ENCODE measurements at regions of chr19 and their contacts with region 1.

Region 1: DNA sequence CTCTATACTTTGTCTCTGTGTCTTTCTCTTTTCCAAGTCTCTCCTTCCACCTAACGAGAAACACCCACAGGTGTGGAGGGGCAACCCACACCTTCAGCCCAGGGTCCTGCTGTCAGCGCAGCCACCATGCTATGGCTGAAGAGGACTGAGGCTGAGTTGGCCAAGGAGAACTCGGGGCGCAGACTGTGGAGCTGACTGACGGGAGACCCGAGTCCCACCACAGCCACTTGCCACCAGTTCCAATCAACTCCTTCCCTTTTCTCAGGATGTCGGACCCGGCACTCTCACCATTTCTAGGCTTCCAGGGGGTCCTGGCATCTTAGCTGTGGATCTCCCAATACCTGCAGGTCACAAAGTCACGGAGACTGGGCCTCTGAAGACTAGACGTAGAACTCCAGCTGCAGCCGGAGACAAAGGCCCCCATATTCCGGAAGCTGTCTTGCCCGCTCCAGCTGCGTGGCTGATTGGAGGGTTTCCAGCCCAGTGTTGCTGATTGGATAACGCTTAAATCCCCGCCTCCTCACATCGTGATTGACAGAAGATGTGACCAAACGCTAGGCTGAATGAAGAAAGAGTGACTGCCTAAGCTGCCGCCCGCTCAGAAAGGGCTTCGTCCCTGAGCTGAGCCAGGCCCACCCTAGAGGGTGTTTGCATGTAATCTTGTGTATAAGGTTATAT is 63.6 kb downstream of the ZNF429 start:
- DNase-seq: peak; percentile 48 to 97 (median 76)
- ATAC-seq: peak; percentile 96
- H3K4me3 ChIP-seq: peak overlapping the region; percentile 81
- H3K4me3 Mint-ChIP-seq: peak overlapping the region; percentile 100
- H3K27ac ChIP-seq: peak overlapping the region; percentile 47 to 56
- H3K27ac Mint-ChIP-seq: peak overlapping the region; percentile 99
- H3K4me1 ChIP-seq: no peaks in the 10 kb centered on the region
- H3K4me1 Mint-ChIP-seq: peaks cover 36% of the 10 kb centered on the region
- H3K27me3 ChIP-seq: no peaks in the 10 kb centered on the region
- H3K27me3 Mint-ChIP-seq: no peaks in the 10 kb centered on the region
- CTCF ChIP-seq: no peak

Region 2: GRCh38 chr19:21141787-21142464 is 427.0 kb before region 1 on chr19 and contains the start of gene ZNF431:
- CTCF ChIA-PET with region 1: no interaction called
- POLR2A ChIA-PET with region 1: interaction called, 16 read pairs
- intact Hi-C with region 1: no loop called
- DNase-seq: peak; percentile 79 to 96 (median 84)
- ATAC-seq: peak; percentile 99
- H3K4me3 ChIP-seq: peak within 1 kb of the TSS; percentile 67
- H3K4me3 Mint-ChIP-seq: peak within 1 kb of the TSS; percentile 95
- H3K27ac ChIP-seq: peak within 1 kb of the TSS; percentile 25 to 37
- H3K27ac Mint-ChIP-seq: peak within 1 kb of the TSS; percentile 91
- H3K4me1 ChIP-seq: peaks cover 8% of the 10 kb centered on the region
- H3K4me1 Mint-ChIP-seq: peaks cover 45% of the 10 kb centered on the region
- H3K27me3 ChIP-seq: no peaks in the 10 kb centered on the region
- H3K27me3 Mint-ChIP-seq: no peaks in the 10 kb centered on the region
- CTCF ChIP-seq: no peak
- total RNA-seq, gene ZNF431: 24.6 to 25.9 TPM

Region 3: GRCh38 chr19:21580101-21580500 is 11.1 kb after region 1 on chr19:
- CTCF ChIA-PET with region 1: no interaction called
- POLR2A ChIA-PET with region 1: interaction called, 97 read pairs
- intact Hi-C with region 1: no loop called
- DNase-seq: peak in 3 of 14 experiments; percentile 16 to 55 (median 25)
- ATAC-seq: peak; percentile 65
- H3K4me3 ChIP-seq: no peak overlapping the region
- H3K4me3 Mint-ChIP-seq: peak overlapping the region; percentile 23
- H3K27ac ChIP-seq: peak overlapping the region in 1 of 2 donors; percentile 64
- H3K27ac Mint-ChIP-seq: peak overlapping the region; percentile 84
- H3K4me1 ChIP-seq: no peaks in the 10 kb centered on the region
- H3K4me1 Mint-ChIP-seq: peaks cover 51% of the 10 kb centered on the region
- H3K27me3 ChIP-seq: no peaks in the 10 kb centered on the region
- H3K27me3 Mint-ChIP-seq: no peaks in the 10 kb centered on the region
- CTCF ChIP-seq: no peak

Region 4: GRCh38 chr19:21586311-21587116 is 17.6 kb after region 1 on chr19:
- CTCF ChIA-PET with region 1: no interaction called
- POLR2A ChIA-PET with region 1: interaction called, 97 read pairs
- intact Hi-C with region 1: no loop called
- DNase-seq: peak in 5 of 14 experiments; percentile 5 to 58 (median 35)
- ATAC-seq: peak; percentile 65
- H3K4me3 ChIP-seq: peak overlapping the region; percentile 57
- H3K4me3 Mint-ChIP-seq: peak overlapping the region; percentile 87
- H3K27ac ChIP-seq: no peak overlapping the region
- H3K27ac Mint-ChIP-seq: peak overlapping the region; percentile 55
- H3K4me1 ChIP-seq: peaks cover 4% of the 10 kb centered on the region
- H3K4me1 Mint-ChIP-seq: peaks cover 49% of the 10 kb centered on the region
- H3K27me3 ChIP-seq: no peaks in the 10 kb centered on the region
- H3K27me3 Mint-ChIP-seq: no peaks in the 10 kb centered on the region
- CTCF ChIP-seq: no peak

Region 5: GRCh38 chr19:21604351-21604926 is 35.5 kb after region 1 on chr19:
- CTCF ChIA-PET with region 1: no interaction called
- POLR2A ChIA-PET with region 1: interaction called, 43 read pairs
- intact Hi-C with region 1: loop called in 1 of 2 experiments (anchors 2 kb)
- DNase-seq: peak in 3 of 14 experiments; percentile 34 to 59 (median 54)
- ATAC-seq: peak; percentile 84
- H3K4me3 ChIP-seq: peak overlapping the region; percentile 56
- H3K4me3 Mint-ChIP-seq: peak overlapping the region; percentile 94
- H3K27ac ChIP-seq: peak overlapping the region; percentile 12 to 54
- H3K27ac Mint-ChIP-seq: peak overlapping the region; percentile 91
- H3K4me1 ChIP-seq: peaks cover 8% of the 10 kb centered on the region
- H3K4me1 Mint-ChIP-seq: peaks cover 21% of the 10 kb centered on the region
- H3K27me3 ChIP-seq: no peaks in the 10 kb centered on the region
- H3K27me3 Mint-ChIP-seq: no peaks in the 10 kb centered on the region
- CTCF ChIP-seq: no peak

Region 6: GRCh38 chr19:21767065-21767800 is 198.3 kb after region 1 on chr19 and contains the start of gene ZNF100:
- CTCF ChIA-PET with region 1: no interaction called
- POLR2A ChIA-PET with region 1: interaction called, 17 read pairs
- intact Hi-C with region 1: no loop called
- DNase-seq: peak; percentile 73 to 92 (median 82)
- ATAC-seq: peak; percentile 98
- H3K4me3 ChIP-seq: peak within 1 kb of the TSS; percentile 94
- H3K4me3 Mint-ChIP-seq: peak within 1 kb of the TSS; percentile 95
- H3K27ac ChIP-seq: peak within 1 kb of the TSS; percentile 44 to 52
- H3K27ac Mint-ChIP-seq: peak within 1 kb of the TSS; percentile 87
- H3K4me1 ChIP-seq: peaks cover 13% of the 10 kb centered on the region
- H3K4me1 Mint-ChIP-seq: peaks cover 45% of the 10 kb centered on the region
- H3K27me3 ChIP-seq: no peaks in the 10 kb centered on the region
- H3K27me3 Mint-ChIP-seq: no peaks in the 10 kb centered on the region
- CTCF ChIP-seq: no peak
- total RNA-seq, gene ZNF100: 10.8 to 11.0 TPM

Region 7: GRCh38 chr19:21835810-21836444 is 267.0 kb after region 1 on chr19 and contains the start of gene ZNF43:
- CTCF ChIA-PET with region 1: no interaction called
- POLR2A ChIA-PET with region 1: interaction called, 10 read pairs
- intact Hi-C with region 1: no loop called
- DNase-seq: peak; percentile 87 to 97 (median 91)
- ATAC-seq: peak; percentile 98
- H3K4me3 ChIP-seq: peak within 1 kb of the TSS; percentile 81
- H3K4me3 Mint-ChIP-seq: peak within 1 kb of the TSS; percentile 97
- H3K27ac ChIP-seq: peak within 1 kb of the TSS; percentile 82 to 83
- H3K27ac Mint-ChIP-seq: peak within 1 kb of the TSS; percentile 94
- H3K4me1 ChIP-seq: peaks cover 14% of the 10 kb centered on the region
- H3K4me1 Mint-ChIP-seq: peaks cover 33% of the 10 kb centered on the region
- H3K27me3 ChIP-seq: no peaks in the 10 kb centered on the region
- H3K27me3 Mint-ChIP-seq: no peaks in the 10 kb centered on the region
- CTCF ChIP-seq: no peak
- total RNA-seq, gene ZNF43: 26.1 to 30.2 TPM

Measured in CD4-positive, alpha-beta T cell (primary cell).